GM18951 (cell line): ENCODE measurements at regions of chr15 and their contacts with region 1.

Region 1: GRCh38 chr15:48861813-48862431 is 16.0 kb upstream of the EID1 start:
- POLR2A ChIP-seq: no peak

Region 2: DNA sequence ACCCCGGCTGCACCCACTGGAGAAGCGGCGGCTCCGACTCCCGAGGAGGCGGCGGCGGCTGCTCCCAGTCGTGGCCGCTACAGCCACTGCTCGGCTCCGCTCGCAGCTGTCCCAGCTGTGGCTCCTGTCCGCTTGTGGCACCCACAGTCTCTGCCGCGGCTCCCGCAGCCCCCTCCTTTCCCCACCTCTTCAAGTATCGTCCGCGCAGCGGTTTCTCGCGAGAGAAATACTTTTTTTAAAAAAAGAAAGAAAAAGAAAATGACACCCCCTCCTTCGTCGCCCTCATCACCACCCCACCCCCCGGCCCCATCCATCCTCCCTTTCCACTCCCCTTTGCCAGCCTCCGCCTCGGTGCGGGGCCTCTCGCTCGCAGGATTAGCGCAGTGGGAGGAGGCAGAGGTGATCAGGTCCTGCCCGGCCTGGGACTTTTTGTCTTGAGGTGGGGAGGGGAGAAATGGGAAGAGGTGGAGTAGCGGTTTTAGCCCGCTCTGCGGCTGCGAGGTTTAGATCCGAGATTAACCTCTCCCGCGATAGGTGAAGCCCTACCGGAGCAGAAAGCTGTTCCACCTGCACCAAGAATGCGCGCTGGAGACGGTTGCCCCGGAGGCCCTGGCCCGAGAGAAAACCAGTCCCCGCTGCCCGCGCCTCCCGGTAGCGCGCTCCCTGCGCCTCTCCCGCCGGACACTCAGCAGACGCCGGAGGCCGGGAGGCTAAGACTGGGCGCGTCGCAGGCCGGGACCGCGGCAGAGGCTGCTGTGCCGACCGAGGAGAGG is 216.2 kb before region 1 on chr15 and contains the start of gene FBN1:
- in situ Hi-C with region 1: no loop called
- POLR2A ChIP-seq: peak; percentile 88

Region 3: DNA sequence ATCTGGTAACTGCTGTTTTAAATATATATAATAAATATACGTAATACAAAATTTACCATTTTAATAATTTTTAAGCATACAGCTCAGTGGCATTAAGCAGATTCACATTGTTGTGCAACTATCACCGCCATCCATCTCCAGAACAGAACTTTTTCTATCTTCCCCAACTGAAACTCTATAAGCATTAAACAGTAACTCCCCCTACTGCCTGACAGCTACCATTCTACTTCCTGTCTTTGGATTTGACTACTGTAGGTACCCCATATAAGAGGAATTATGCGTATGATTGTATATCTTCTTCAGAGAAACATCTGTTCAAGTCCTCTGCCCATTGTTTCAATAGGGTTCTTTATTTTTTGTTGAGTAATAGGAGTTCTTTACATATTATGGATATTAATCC is 52.8 kb after region 1 on chr15:
- in situ Hi-C with region 1: no loop called
- POLR2A ChIP-seq: no peak

Region 4: GRCh38 chr15:49145651-49146609 is 284.0 kb after region 1 on chr15:
- in situ Hi-C with region 1: loop called (anchors 25 kb)
- POLR2A ChIP-seq: no peak

Region 5: GRCh38 chr15:49421991-49422390 is 560.1 kb after region 1 on chr15:
- in situ Hi-C with region 1: loop called (anchors 25 kb)
- POLR2A ChIP-seq: no peak

Region 6: GRCh38 chr15:50166216-50166615 is 1304.3 kb after region 1 on chr15:
- in situ Hi-C with region 1: loop called (anchors 25 kb)
- POLR2A ChIP-seq: no peak